ENCODE measurements at regions of chr5 and their contacts with region 1.

Region 1: GRCh38 chr5:80960531-80961375 is 590 bp downstream of the RASGRF2 start:
- DNase-seq: peak; percentile 25
- H3K4me3 ChIP-seq: peak overlapping the region; percentile 20 to 49 (median 35)
- H3K27ac ChIP-seq: no peak overlapping the region
- H3K4me1 ChIP-seq: peaks cover 35% of the 10 kb centered on the region
- H3K27me3 ChIP-seq: peaks cover 17 to 35% of the 10 kb centered on the region in 2 experiments
- CTCF ChIP-seq: peak in 1 of 2 donors; percentile 1
- POLR2A ChIP-seq: no peak

Region 2: GRCh38 chr5:80654391-80655230 is 306.1 kb before region 1 on chr5 and contains the starts of genes DHFR and MSH3:
- CTCF ChIA-PET with region 1: no interaction called
- POLR2A ChIA-PET with region 1: no interaction called
- dilution Hi-C with region 1: no loop called
- intact Hi-C with region 1: loop called (anchors 2 kb)
- DNase-seq: peak; percentile 88
- H3K4me3 ChIP-seq: peak within 1 kb of the TSS; percentile 76 to 93 (median 81)
- H3K27ac ChIP-seq: peak within 1 kb of the TSS; percentile 79
- H3K4me1 ChIP-seq: peaks cover 20% of the 10 kb centered on the region
- H3K27me3 ChIP-seq: no peaks in the 10 kb centered on the region
- CTCF ChIP-seq: peak; percentile 5 to 18
- POLR2A ChIP-seq: peak; percentile 80
- total RNA-seq, gene DHFR: 32.8 and 35.8 TPM in 2 replicates
- total RNA-seq, gene MSH3: 10.5 and 13.0 TPM in 2 replicates

Region 3: DNA sequence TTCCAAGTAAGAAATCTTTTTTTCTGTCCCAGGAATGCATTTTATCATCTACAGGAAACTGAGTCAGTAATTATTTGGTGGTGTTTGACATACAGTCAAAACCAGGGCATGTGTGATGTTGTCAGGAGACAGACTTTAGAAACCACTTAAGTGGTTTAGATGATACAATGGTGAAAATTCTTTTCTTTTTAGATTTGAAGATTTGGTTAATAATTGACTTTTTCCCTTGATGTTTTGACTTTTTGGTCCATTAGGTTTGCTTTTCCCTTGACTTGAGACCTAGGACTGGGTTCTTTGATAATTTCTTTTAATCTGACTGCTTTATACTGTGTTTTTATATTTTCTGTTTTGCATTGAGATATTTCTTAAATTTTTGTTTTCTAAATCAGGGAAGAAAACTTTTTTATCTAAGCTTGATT is 84.6 kb after region 1 on chr5:
- CTCF ChIA-PET with region 1: no interaction called
- POLR2A ChIA-PET with region 1: no interaction called
- dilution Hi-C with region 1: no loop called
- intact Hi-C with region 1: loop called (anchors 5 kb)
- DNase-seq: no peak
- H3K4me3 ChIP-seq: no peak overlapping the region
- H3K27ac ChIP-seq: no peak overlapping the region
- H3K4me1 ChIP-seq: peaks cover 9% of the 10 kb centered on the region
- H3K27me3 ChIP-seq: no peaks in the 10 kb centered on the region
- CTCF ChIP-seq: no peak
- POLR2A ChIP-seq: no peak

Region 4: GRCh38 chr5:81105261-81105877 is 144.6 kb after region 1 on chr5:
- CTCF ChIA-PET with region 1: interaction called, 9 read pairs
- POLR2A ChIA-PET with region 1: no interaction called
- dilution Hi-C with region 1: no loop called
- intact Hi-C with region 1: loop called (anchors 1 kb)
- DNase-seq: no peak
- H3K4me3 ChIP-seq: no peak overlapping the region
- H3K27ac ChIP-seq: no peak overlapping the region
- H3K4me1 ChIP-seq: no peaks in the 10 kb centered on the region
- H3K27me3 ChIP-seq: no peaks in the 10 kb centered on the region
- CTCF ChIP-seq: no peak
- POLR2A ChIP-seq: no peak

Region 5: GRCh38 chr5:81134066-81134465 is 173.3 kb after region 1 on chr5:
- CTCF ChIA-PET with region 1: no interaction called
- POLR2A ChIA-PET with region 1: no interaction called
- dilution Hi-C with region 1: no loop called
- intact Hi-C with region 1: no loop called
- DNase-seq: no peak
- H3K4me3 ChIP-seq: no peak overlapping the region
- H3K27ac ChIP-seq: no peak overlapping the region
- H3K4me1 ChIP-seq: no peaks in the 10 kb centered on the region
- H3K27me3 ChIP-seq: no peaks in the 10 kb centered on the region
- CTCF ChIP-seq: no peak
- POLR2A ChIP-seq: no peak